MCF 10A (cell line): ENCODE measurements at regions of chr4 and their contacts with region 1.

Region 1: GRCh38 chr4:147866532-147867271 is 134.8 kb downstream of the ARHGAP10 start:
- DNase-seq: peak; percentile 93
- H3K4me3 Mint-ChIP-seq: no peak overlapping the region
- H3K27ac Mint-ChIP-seq: peak overlapping the region; percentile 75
- H3K4me1 Mint-ChIP-seq: no peaks in the 10 kb centered on the region
- H3K27me3 Mint-ChIP-seq: no peaks in the 10 kb centered on the region
- CTCF ChIP-seq: peak; percentile 98

Region 2: GRCh38 chr4:147160908-147161513 is 705.7 kb before region 1 on chr4:
- CTCF ChIA-PET with region 1: interaction called, 3 read pairs
- POLR2A ChIA-PET with region 1: no interaction called
- intact Hi-C with region 1: loop called (anchors 1 kb)
- DNase-seq: peak; percentile 63
- H3K4me3 Mint-ChIP-seq: no peak overlapping the region
- H3K27ac Mint-ChIP-seq: no peak overlapping the region
- H3K4me1 Mint-ChIP-seq: no peaks in the 10 kb centered on the region
- H3K27me3 Mint-ChIP-seq: no peaks in the 10 kb centered on the region
- CTCF ChIP-seq: peak; percentile 78

Region 3: GRCh38 chr4:147683717-147684700 is 182.7 kb before region 1 on chr4 and contains the start of gene PRMT9:
- CTCF ChIA-PET with region 1: interaction called, 19 read pairs
- POLR2A ChIA-PET with region 1: interaction called, 16 read pairs
- intact Hi-C with region 1: no loop called
- DNase-seq: peak; percentile 87
- H3K4me3 Mint-ChIP-seq: peak within 1 kb of the TSS; percentile 88
- H3K27ac Mint-ChIP-seq: peak within 1 kb of the TSS; percentile 89
- H3K4me1 Mint-ChIP-seq: peaks cover 11% of the 10 kb centered on the region
- H3K27me3 Mint-ChIP-seq: no peaks in the 10 kb centered on the region
- CTCF ChIP-seq: no peak
- total RNA-seq, gene PRMT9: 6.1 and 8.4 TPM in 2 replicates

Region 4: DNA sequence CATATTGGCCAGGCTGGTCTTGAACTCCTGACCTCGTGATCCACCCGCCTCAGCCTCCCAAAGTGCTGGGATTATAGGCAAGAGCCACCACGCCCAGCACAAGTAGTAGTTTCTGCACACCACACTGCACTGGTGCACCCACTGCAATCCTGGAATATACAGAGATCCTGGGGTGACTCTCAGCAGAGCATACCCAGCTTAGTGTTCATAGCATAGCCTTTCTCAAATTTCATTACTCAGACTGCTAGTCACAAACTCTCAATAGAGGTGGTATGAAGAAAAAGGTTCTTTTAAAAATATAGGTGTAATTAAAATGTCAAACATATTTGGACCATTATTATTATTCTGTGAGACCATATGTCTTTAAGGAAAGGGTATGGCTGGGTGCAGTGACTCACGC is 141.0 kb before region 1 on chr4:
- CTCF ChIA-PET with region 1: interaction called, 36 read pairs
- POLR2A ChIA-PET with region 1: interaction called, 3 read pairs
- intact Hi-C with region 1: no loop called
- DNase-seq: no peak
- H3K4me3 Mint-ChIP-seq: no peak overlapping the region
- H3K27ac Mint-ChIP-seq: no peak overlapping the region
- H3K4me1 Mint-ChIP-seq: peaks cover 12% of the 10 kb centered on the region
- H3K27me3 Mint-ChIP-seq: no peaks in the 10 kb centered on the region
- CTCF ChIP-seq: no peak

Region 5: DNA sequence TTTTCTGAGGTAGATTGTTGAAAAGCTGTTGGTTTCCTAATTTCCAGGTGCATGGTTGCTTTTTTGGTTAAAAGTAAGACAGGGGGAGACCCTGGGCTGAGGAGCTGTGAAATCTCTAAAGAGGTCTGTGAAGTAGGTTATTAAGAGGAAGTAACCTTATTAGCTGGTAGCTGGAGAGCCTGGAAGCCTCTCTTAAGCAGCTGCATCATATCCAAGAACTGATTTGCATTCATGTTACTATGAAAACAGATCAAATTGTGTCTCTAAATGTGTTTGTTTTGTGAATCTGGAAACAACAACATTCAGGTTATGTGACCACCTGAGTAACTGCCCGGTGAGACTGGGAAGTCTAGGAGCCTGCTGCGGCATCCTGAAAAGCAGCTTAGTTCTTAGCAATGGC is 80.7 kb before region 1 on chr4:
- CTCF ChIA-PET with region 1: interaction called, 18 read pairs
- POLR2A ChIA-PET with region 1: no interaction called
- intact Hi-C with region 1: no loop called
- DNase-seq: no peak
- H3K4me3 Mint-ChIP-seq: no peak overlapping the region
- H3K27ac Mint-ChIP-seq: no peak overlapping the region
- H3K4me1 Mint-ChIP-seq: peaks cover 26% of the 10 kb centered on the region
- H3K27me3 Mint-ChIP-seq: no peaks in the 10 kb centered on the region
- CTCF ChIP-seq: no peak

Region 6: GRCh38 chr4:147855571-147856009 is 11.1 kb before region 1 on chr4:
- CTCF ChIA-PET with region 1: interaction called, 126 read pairs
- POLR2A ChIA-PET with region 1: no interaction called
- intact Hi-C with region 1: no loop called
- DNase-seq: no peak
- H3K4me3 Mint-ChIP-seq: no peak overlapping the region
- H3K27ac Mint-ChIP-seq: no peak overlapping the region
- H3K4me1 Mint-ChIP-seq: peaks cover 6% of the 10 kb centered on the region
- H3K27me3 Mint-ChIP-seq: no peaks in the 10 kb centered on the region
- CTCF ChIP-seq: no peak

Region 7: DNA sequence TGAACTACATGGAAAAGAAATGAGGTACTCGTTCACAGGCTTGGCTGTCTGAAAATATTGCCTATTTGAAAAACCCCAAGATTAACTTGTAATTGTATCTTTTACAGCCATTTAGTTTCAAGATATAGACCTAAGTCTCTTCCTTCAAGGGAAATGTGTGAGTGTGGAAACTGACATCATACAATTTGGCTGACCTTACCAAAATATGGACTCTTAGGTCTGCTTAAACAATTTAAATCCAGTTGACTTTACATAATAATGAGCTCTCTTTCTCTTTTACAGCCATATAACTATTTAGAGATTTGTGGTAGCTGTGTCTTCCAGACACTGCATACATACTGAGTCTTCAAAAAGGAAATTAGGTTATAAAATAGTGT is 388.6 kb after region 1 on chr4:
- CTCF ChIA-PET with region 1: no interaction called
- POLR2A ChIA-PET with region 1: no interaction called
- intact Hi-C with region 1: no loop called
- DNase-seq: no peak
- H3K4me3 Mint-ChIP-seq: no peak overlapping the region
- H3K27ac Mint-ChIP-seq: no peak overlapping the region
- H3K4me1 Mint-ChIP-seq: no peaks in the 10 kb centered on the region
- H3K27me3 Mint-ChIP-seq: no peaks in the 10 kb centered on the region
- CTCF ChIP-seq: no peak